CD4-positive, alpha-beta memory T cell (primary cell): ENCODE measurements at regions of chr3 and their contacts with region 1.

Region 1: DNA sequence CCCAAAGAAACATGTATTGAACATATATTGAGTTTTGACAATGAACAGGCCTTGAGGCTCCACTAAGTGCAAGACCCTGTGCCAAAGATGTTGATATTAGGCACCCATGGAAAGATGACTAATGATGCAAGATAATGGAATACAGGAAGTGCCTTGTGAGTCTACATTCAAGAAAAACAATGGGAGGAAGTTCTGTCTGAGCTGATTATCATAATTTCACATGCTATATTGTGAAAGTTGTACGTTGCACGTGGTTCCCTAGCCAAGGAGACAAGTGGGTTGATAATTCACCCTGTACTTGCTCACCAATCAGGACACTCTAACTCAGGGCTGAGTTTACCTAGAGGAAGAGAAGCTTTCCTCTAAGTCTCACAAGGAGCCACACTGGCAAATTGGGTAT is 186.9 kb upstream of the STAC start:
- DNase-seq: no peak
- H3K4me3 ChIP-seq: no peak overlapping the region
- H3K4me3 Mint-ChIP-seq: no peak overlapping the region
- H3K27ac ChIP-seq: no peak overlapping the region
- H3K27ac Mint-ChIP-seq: no peak overlapping the region
- H3K4me1 ChIP-seq: no peaks in the 10 kb centered on the region
- H3K4me1 Mint-ChIP-seq: no peaks in the 10 kb centered on the region
- H3K27me3 ChIP-seq: no peaks in the 10 kb centered on the region
- H3K27me3 Mint-ChIP-seq: peaks cover 0 to 2% of the 10 kb centered on the region in 2 donors

Region 2: DNA sequence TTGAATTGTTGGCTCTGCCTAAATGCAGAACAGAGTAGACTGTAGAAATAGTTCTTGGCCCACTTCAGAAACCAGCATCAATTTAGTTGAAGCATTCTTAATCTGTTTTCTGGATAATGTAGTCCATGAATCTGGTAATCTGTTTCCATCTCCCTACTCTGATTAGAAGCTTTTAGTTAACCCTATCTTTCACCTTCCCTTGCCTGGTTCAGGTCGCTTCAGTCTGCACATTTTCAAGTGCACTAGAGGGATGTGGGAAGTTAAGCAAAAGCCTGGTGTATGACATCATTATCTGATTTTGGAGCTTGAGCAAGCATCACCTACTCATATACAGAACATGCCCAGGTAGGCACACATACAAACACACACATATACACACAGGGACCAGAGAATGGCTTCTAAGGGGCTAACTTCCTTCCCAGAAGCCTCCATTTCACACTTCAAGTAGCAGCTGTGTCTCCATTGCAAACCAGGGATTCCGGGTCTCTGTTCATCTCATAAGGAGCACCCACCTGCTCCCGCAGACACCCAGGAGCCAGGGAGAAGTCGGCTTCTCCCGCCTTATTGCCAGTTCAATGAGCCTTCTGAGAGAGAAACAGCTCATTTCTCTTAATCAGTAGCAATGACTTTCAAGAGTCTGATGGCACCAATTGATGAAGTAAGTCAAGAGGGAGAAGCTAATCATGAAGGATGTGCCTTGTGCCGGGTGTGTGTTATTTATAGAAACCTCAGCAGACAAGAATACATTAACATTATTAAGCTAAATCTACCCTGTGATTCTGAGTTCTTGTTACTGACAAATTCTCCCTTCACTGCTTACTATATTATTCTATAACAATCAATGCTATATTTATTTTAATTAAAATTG is 161.0 kb before region 1 on chr3:
- CTCF ChIA-PET with region 1: no interaction called
- POLR2A ChIA-PET with region 1: no interaction called
- intact Hi-C with region 1: no loop called
- DNase-seq: no peak
- H3K4me3 ChIP-seq: no peak overlapping the region
- H3K4me3 Mint-ChIP-seq: no peak overlapping the region
- H3K27ac ChIP-seq: no peak overlapping the region
- H3K27ac Mint-ChIP-seq: no peak overlapping the region
- H3K4me1 ChIP-seq: no peaks in the 10 kb centered on the region
- H3K4me1 Mint-ChIP-seq: no peaks in the 10 kb centered on the region
- H3K27me3 ChIP-seq: no peaks in the 10 kb centered on the region
- H3K27me3 Mint-ChIP-seq: no peaks in the 10 kb centered on the region

Region 3: GRCh38 chr3:36149447-36149865 is 44.0 kb before region 1 on chr3:
- CTCF ChIA-PET with region 1: no interaction called
- POLR2A ChIA-PET with region 1: no interaction called
- intact Hi-C with region 1: no loop called
- DNase-seq: no peak
- H3K4me3 ChIP-seq: no peak overlapping the region
- H3K4me3 Mint-ChIP-seq: no peak overlapping the region
- H3K27ac ChIP-seq: no peak overlapping the region
- H3K27ac Mint-ChIP-seq: no peak overlapping the region
- H3K4me1 ChIP-seq: no peaks in the 10 kb centered on the region
- H3K4me1 Mint-ChIP-seq: no peaks in the 10 kb centered on the region
- H3K27me3 ChIP-seq: no peaks in the 10 kb centered on the region
- H3K27me3 Mint-ChIP-seq: no peaks in the 10 kb centered on the region

Region 4: GRCh38 chr3:36220173-36220572 is 26.7 kb after region 1 on chr3:
- CTCF ChIA-PET with region 1: no interaction called
- POLR2A ChIA-PET with region 1: no interaction called
- intact Hi-C with region 1: loop called (anchors 1 kb)
- DNase-seq: no peak
- H3K4me3 ChIP-seq: no peak overlapping the region
- H3K4me3 Mint-ChIP-seq: no peak overlapping the region
- H3K27ac ChIP-seq: no peak overlapping the region
- H3K27ac Mint-ChIP-seq: no peak overlapping the region
- H3K4me1 ChIP-seq: no peaks in the 10 kb centered on the region
- H3K4me1 Mint-ChIP-seq: no peaks in the 10 kb centered on the region
- H3K27me3 ChIP-seq: no peaks in the 10 kb centered on the region
- H3K27me3 Mint-ChIP-seq: no peaks in the 10 kb centered on the region